ENCODE measurements at regions of chrX and their contacts with region 1.

Region 1: DNA sequence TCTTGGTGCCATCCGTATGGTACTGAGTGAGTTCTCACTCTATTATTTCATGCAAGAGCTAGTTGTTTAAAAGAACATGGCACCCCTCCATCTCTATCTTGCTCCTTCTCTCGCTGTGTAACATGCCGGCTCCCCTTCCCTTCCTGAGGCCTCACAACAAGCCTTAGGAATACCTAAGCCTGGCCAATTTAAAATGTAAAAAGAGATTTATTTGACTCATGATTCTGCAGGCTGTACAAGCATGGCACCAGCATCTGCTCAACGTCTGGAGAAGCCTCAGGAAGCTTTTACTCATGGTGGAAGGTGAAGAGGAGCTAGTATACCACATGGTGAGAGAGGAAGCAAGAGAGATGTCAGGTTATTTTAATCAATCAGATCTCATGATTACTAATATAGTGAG is 90.4 kb upstream of the NUDT10 start:
- DNase-seq: no peak

Region 2: GRCh38 chrX:51298806-51299205 is 56.6 kb after region 1 on chrX:
- intact Hi-C with region 1: loop called (anchors 10 kb)
- DNase-seq: no peak

Measured in posterior cingulate gyrus (tissue), 11 donors.